Activated CD4-positive, alpha-beta T cell treated with anti-CD3 and anti-CD28 coated beads for 36 hours (primary cell): ENCODE measurements at regions of chr21 and their contacts with region 1.

Region 1: DNA sequence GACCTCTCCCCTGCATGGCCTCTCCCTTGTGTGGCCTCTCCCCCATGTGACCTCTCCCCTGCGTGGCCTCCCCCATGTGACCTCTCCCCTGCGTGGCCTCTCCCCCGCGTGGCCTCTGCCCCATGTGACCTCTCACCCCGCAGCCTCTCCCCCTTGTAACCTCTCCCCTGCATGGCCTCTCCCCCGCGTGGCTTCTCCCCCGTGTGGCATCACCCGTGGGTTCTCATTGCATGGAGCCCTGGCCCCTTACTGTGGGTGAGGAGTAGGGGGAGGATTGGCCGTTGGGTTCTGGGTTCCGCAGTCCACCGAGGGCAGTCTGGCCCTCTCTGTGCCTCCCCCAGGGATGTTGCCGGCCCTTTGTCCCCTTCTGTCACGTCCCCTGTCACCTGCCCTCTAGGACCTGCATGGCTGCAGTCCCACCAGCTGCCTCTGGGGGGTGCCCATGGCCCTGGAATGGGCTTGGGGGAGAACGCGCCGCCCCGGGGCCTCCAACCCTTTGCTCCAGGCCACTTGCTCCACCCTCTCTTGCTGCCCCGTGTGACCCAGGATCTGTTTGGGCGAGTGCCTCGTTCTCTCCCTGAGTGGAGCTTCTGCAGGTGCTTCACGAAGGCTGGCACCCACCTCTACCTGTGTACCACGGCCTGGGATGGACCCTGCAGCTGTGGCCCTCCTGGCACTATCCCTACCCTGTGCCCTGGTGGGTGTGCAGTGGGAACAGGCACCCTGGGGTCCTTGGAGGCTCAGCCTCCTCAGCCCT is 21.3 kb downstream of the RRP1 start:
- DNase-seq: peak; percentile 97
- ATAC-seq: peak; percentile 96
- H3K4me3 Mint-ChIP-seq: no peak overlapping the region
- H3K27ac Mint-ChIP-seq: peak overlapping the region; percentile 42
- H3K4me1 Mint-ChIP-seq: peaks cover 6% of the 10 kb centered on the region
- H3K27me3 Mint-ChIP-seq: no peaks in the 10 kb centered on the region

Region 2: GRCh38 chr21:43015921-43016540 is 794.7 kb before region 1 on chr21:
- CTCF ChIA-PET with region 1: no interaction called
- POLR2A ChIA-PET with region 1: no interaction called
- intact Hi-C with region 1: no loop called
- DNase-seq: no peak
- ATAC-seq: no peak
- H3K4me3 Mint-ChIP-seq: no peak overlapping the region
- H3K27ac Mint-ChIP-seq: no peak overlapping the region
- H3K4me1 Mint-ChIP-seq: no peaks in the 10 kb centered on the region
- H3K27me3 Mint-ChIP-seq: no peaks in the 10 kb centered on the region

Region 3: DNA sequence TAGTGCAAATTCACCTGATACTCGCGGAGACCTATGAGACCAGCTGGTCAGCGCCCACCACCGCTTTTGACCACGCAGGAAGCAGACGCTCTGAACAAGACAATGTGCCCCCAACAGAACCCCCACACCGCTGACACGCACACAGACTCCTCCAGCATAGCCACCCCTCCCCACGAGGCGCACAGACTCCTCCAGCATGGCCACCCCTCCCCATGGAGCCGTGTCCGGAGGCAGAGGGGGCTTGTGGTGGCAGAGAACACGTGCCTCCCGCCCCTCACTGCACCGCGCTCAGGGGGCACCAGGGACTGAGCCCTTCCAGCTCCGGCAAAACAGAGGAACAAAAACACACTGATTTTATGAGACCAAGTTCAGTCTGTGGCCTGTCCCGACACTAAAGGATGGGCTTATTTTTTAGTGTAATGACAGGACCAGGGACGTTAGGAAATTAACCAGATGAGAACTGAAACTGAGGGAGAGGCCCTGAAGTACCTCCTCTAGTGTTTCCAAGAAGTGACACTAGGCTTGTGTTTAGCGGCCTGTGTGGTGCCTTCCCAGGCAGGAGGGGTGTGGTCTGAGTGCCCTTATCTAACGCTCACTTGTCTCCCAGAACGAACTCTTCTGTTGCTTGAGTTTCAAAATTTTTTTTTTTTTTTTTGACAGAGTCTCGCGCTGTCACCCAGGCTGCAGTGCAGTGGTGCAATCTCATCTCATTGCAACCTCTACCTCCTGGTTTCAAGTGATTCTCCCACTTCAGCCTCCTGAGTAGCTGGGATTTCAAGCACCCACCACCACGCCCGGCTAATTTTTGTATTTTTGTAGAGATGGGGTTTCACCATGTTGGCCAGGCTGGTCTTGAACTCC is 44.3 kb after region 1 on chr21:
- CTCF ChIA-PET with region 1: no interaction called
- POLR2A ChIA-PET with region 1: no interaction called
- intact Hi-C with region 1: loop called in 1 of 2 experiments (anchors 5 kb)
- DNase-seq: peak; percentile 78
- ATAC-seq: peak; percentile 97
- H3K4me3 Mint-ChIP-seq: peak overlapping the region; percentile 9
- H3K27ac Mint-ChIP-seq: peak overlapping the region; percentile 80
- H3K4me1 Mint-ChIP-seq: peaks cover 25% of the 10 kb centered on the region
- H3K27me3 Mint-ChIP-seq: peaks cover 11% of the 10 kb centered on the region

Region 4: GRCh38 chr21:43893536-43894205 is 83.0 kb after region 1 on chr21:
- CTCF ChIA-PET with region 1: no interaction called
- POLR2A ChIA-PET with region 1: no interaction called
- intact Hi-C with region 1: loop called (anchors 2 to 5 kb)
- DNase-seq: peak; percentile 72
- ATAC-seq: peak; percentile 95
- H3K4me3 Mint-ChIP-seq: peak overlapping the region; percentile 70
- H3K27ac Mint-ChIP-seq: peak overlapping the region; percentile 90
- H3K4me1 Mint-ChIP-seq: peaks cover 47% of the 10 kb centered on the region
- H3K27me3 Mint-ChIP-seq: no peaks in the 10 kb centered on the region

Region 5: GRCh38 chr21:43916691-43917514 is 106.2 kb after region 1 on chr21:
- CTCF ChIA-PET with region 1: interaction called, 9 read pairs
- POLR2A ChIA-PET with region 1: no interaction called
- intact Hi-C with region 1: loop called (anchors 5 kb)
- DNase-seq: peak; percentile 84
- ATAC-seq: peak; percentile 83
- H3K4me3 Mint-ChIP-seq: peak overlapping the region; percentile 81
- H3K27ac Mint-ChIP-seq: peak overlapping the region; percentile 78
- H3K4me1 Mint-ChIP-seq: peaks cover 61% of the 10 kb centered on the region
- H3K27me3 Mint-ChIP-seq: no peaks in the 10 kb centered on the region

Region 6: GRCh38 chr21:43938751-43939442 is 128.2 kb after region 1 on chr21:
- CTCF ChIA-PET with region 1: interaction called, 6 read pairs
- POLR2A ChIA-PET with region 1: no interaction called
- intact Hi-C with region 1: loop called (anchors 1 kb)
- DNase-seq: peak; percentile 95
- ATAC-seq: peak; percentile 98
- H3K4me3 Mint-ChIP-seq: peak overlapping the region; percentile 76
- H3K27ac Mint-ChIP-seq: peak overlapping the region; percentile 86
- H3K4me1 Mint-ChIP-seq: peaks cover 19% of the 10 kb centered on the region
- H3K27me3 Mint-ChIP-seq: no peaks in the 10 kb centered on the region

Region 7: GRCh38 chr21:43975495-43975993 is 164.9 kb after region 1 on chr21:
- CTCF ChIA-PET with region 1: interaction called, 5 read pairs
- POLR2A ChIA-PET with region 1: interaction called, 3 read pairs
- intact Hi-C with region 1: loop called (anchors 1 kb)
- DNase-seq: peak; percentile 92
- ATAC-seq: peak; percentile 94
- H3K4me3 Mint-ChIP-seq: no peak overlapping the region
- H3K27ac Mint-ChIP-seq: peak overlapping the region; percentile 86
- H3K4me1 Mint-ChIP-seq: peaks cover 9% of the 10 kb centered on the region
- H3K27me3 Mint-ChIP-seq: no peaks in the 10 kb centered on the region

Region 8: GRCh38 chr21:44089001-44089911 is 278.6 kb after region 1 on chr21:
- CTCF ChIA-PET with region 1: no interaction called
- POLR2A ChIA-PET with region 1: no interaction called
- intact Hi-C with region 1: loop called in 1 of 2 experiments (anchors 10 kb)
- DNase-seq: peak; percentile 44
- ATAC-seq: peak; percentile 70
- H3K4me3 Mint-ChIP-seq: no peak overlapping the region
- H3K27ac Mint-ChIP-seq: peak overlapping the region; percentile 87
- H3K4me1 Mint-ChIP-seq: peaks cover 61% of the 10 kb centered on the region
- H3K27me3 Mint-ChIP-seq: no peaks in the 10 kb centered on the region